ENCODE measurements at regions of chr5 and their contacts with region 1.

Region 1: GRCh38 chr5:132437604-132438266 is 52.8 kb downstream of the IRF1 start:
- DNase-seq: peak; percentile 35 to 82 (median 48)
- H3K4me3 ChIP-seq: peak overlapping the region; percentile 55
- H3K4me3 Mint-ChIP-seq: peak overlapping the region; percentile 62 to 86 (median 74)
- H3K27ac ChIP-seq: peak overlapping the region; percentile 45
- H3K27ac Mint-ChIP-seq: peak overlapping the region; percentile 89 to 98 (median 94)
- H3K4me1 ChIP-seq: peaks cover 95% of the 10 kb centered on the region
- H3K4me1 Mint-ChIP-seq: peaks cover 88 to 99% (median 95%) of the 10 kb centered on the region in 3 donors
- H3K27me3 ChIP-seq: no peaks in the 10 kb centered on the region
- H3K27me3 Mint-ChIP-seq: no peaks in the 10 kb centered on the region

Region 2: GRCh38 chr5:132466433-132467286 is 28.9 kb after region 1 on chr5:
- CTCF ChIA-PET with region 1: interaction called, 11 read pairs
- POLR2A ChIA-PET with region 1: interaction called, 10 read pairs
- DNase-seq: peak; percentile 63 to 88 (median 78)
- H3K4me3 ChIP-seq: peak overlapping the region; percentile 57
- H3K4me3 Mint-ChIP-seq: peak overlapping the region; percentile 72 to 92 (median 82)
- H3K27ac ChIP-seq: peak overlapping the region; percentile 64
- H3K27ac Mint-ChIP-seq: peak overlapping the region; percentile 87 to 100 (median 98)
- H3K4me1 ChIP-seq: peaks cover 95% of the 10 kb centered on the region
- H3K4me1 Mint-ChIP-seq: peaks cover 98 to 100% (median 99%) of the 10 kb centered on the region in 3 donors
- H3K27me3 ChIP-seq: no peaks in the 10 kb centered on the region
- H3K27me3 Mint-ChIP-seq: no peaks in the 10 kb centered on the region

Region 3: GRCh38 chr5:132473019-132473531 is 35.3 kb after region 1 on chr5:
- CTCF ChIA-PET with region 1: interaction called, 13 read pairs
- POLR2A ChIA-PET with region 1: interaction called, 14 read pairs
- DNase-seq: peak; percentile 81 to 96 (median 89)
- H3K4me3 ChIP-seq: no peak overlapping the region
- H3K4me3 Mint-ChIP-seq: peak overlapping the region; percentile 39 to 86 (median 64)
- H3K27ac ChIP-seq: peak overlapping the region; percentile 62
- H3K27ac Mint-ChIP-seq: peak overlapping the region; percentile 93 to 99 (median 96)
- H3K4me1 ChIP-seq: peaks cover 86% of the 10 kb centered on the region
- H3K4me1 Mint-ChIP-seq: peaks cover 87 to 99% (median 97%) of the 10 kb centered on the region in 3 donors
- H3K27me3 ChIP-seq: no peaks in the 10 kb centered on the region
- H3K27me3 Mint-ChIP-seq: peaks cover 0 to 9% of the 10 kb centered on the region in 2 donors

Region 4: GRCh38 chr5:132479111-132479951 is 41.6 kb after region 1 on chr5:
- CTCF ChIA-PET with region 1: interaction called, 13 read pairs
- POLR2A ChIA-PET with region 1: interaction called, 14 read pairs
- DNase-seq: peak in 2 of 5 donors; percentile 10 to 18
- H3K4me3 ChIP-seq: no peak overlapping the region
- H3K4me3 Mint-ChIP-seq: peak overlapping the region in 6 of 7 donors; percentile 6 to 58 (median 30)
- H3K27ac ChIP-seq: no peak overlapping the region
- H3K27ac Mint-ChIP-seq: peak overlapping the region; percentile 72 to 98 (median 94)
- H3K4me1 ChIP-seq: peaks cover 73% of the 10 kb centered on the region
- H3K4me1 Mint-ChIP-seq: peaks cover 79 to 94% (median 82%) of the 10 kb centered on the region in 3 donors
- H3K27me3 ChIP-seq: no peaks in the 10 kb centered on the region
- H3K27me3 Mint-ChIP-seq: peaks cover 0 to 9% of the 10 kb centered on the region in 2 donors

Region 5: DNA sequence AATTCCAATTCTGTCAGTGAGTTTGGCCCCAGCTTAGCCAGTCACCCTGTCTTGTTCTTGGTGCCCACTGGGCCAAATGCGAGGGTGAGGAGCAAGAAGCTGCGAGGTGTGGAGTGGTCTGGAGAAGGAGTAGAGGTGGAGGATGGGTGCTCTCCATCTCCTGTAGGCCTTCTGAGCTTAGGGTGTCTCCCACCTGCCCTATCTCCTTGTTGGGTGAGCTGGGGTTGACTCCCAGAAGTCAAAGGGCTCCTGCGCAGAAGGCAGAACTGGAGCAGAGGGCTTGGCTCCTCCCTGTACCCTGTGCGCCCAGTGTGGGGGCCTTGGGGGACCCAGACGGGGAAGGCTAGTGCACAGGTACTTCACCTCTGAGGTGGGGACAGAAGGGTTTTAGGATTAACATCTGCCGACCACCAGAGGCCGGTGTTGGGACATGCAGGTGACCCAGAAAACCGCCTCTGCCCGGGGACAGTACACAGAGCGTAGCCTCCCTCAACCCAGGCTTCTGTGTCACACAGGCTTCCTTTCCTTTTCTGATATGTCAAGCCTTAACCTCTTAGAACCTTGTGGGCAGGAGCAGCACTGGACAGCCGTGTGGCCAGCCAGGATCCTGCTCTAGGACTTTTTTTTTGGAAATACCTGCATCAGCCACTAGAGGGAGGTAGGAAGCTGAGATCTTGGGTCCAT is 88.7 kb after region 1 on chr5:
- CTCF ChIA-PET with region 1: no interaction called
- POLR2A ChIA-PET with region 1: no interaction called
- DNase-seq: peak in 4 of 5 donors; percentile 5 to 50 (median 44)
- H3K4me3 ChIP-seq: no peak overlapping the region
- H3K4me3 Mint-ChIP-seq: peak overlapping the region in 2 of 7 donors; percentile 25 to 71
- H3K27ac ChIP-seq: no peak overlapping the region
- H3K27ac Mint-ChIP-seq: no peak overlapping the region
- H3K4me1 ChIP-seq: peaks cover 6% of the 10 kb centered on the region
- H3K4me1 Mint-ChIP-seq: peaks cover 4 to 19% (median 10%) of the 10 kb centered on the region in 3 donors
- H3K27me3 ChIP-seq: no peaks in the 10 kb centered on the region
- H3K27me3 Mint-ChIP-seq: peaks cover 2 to 5% of the 10 kb centered on the region in 2 donors